Colonic mucosa (tissue), 4 donors: ENCODE measurements at regions of chr22 and their contacts with region 1.

Region 1: GRCh38 chr22:50250555-50251476 is at the start of gene HDAC10:
- DNase-seq: peak; percentile 90
- H3K4me3 ChIP-seq: peak within 1 kb of the TSS; percentile 90
- H3K27ac ChIP-seq: peak within 1 kb of the TSS; percentile 47
- H3K4me1 ChIP-seq: peaks cover 23% of the 10 kb centered on the region
- H3K27me3 ChIP-seq: no peaks in the 10 kb centered on the region
- CTCF ChIP-seq: no peak
- total RNA-seq, gene HDAC10: 40.5 to 59.1 TPM

Region 2: GRCh38 chr22:50148991-50149721 is 101.7 kb before region 1 on chr22:
- intact Hi-C with region 1: no loop called
- DNase-seq: peak; percentile 61
- H3K4me3 ChIP-seq: no peak overlapping the region
- H3K27ac ChIP-seq: no peak overlapping the region
- H3K4me1 ChIP-seq: no peaks in the 10 kb centered on the region
- H3K27me3 ChIP-seq: no peaks in the 10 kb centered on the region
- CTCF ChIP-seq: peak; percentile 77

Region 3: DNA sequence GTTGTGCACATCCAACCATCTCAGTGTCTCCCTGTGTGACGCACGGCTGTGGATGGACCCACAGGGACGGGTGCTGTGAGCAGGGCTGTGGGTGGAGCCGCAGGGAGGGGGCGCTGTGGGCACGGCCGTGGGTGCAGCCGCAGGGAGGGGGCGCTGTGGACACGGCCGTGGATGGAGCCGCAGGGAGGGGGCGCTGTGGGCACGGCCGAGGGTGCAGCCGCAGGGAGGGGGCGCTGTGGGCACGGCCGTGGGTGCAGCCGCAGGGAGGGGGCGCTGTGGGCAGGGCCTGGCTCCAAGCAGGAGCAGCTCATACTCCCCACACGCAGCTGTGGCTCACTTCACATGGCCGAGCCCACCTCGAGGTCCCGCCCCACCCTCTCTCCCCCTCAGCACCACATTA is 25.3 kb after region 1 on chr22:
- intact Hi-C with region 1: no loop called
- DNase-seq: peak; percentile 74
- H3K4me3 ChIP-seq: no peak overlapping the region
- H3K27ac ChIP-seq: no peak overlapping the region
- H3K4me1 ChIP-seq: peaks cover 8% of the 10 kb centered on the region
- H3K27me3 ChIP-seq: peaks cover 8% of the 10 kb centered on the region
- CTCF ChIP-seq: peak; percentile 71

Region 4: DNA sequence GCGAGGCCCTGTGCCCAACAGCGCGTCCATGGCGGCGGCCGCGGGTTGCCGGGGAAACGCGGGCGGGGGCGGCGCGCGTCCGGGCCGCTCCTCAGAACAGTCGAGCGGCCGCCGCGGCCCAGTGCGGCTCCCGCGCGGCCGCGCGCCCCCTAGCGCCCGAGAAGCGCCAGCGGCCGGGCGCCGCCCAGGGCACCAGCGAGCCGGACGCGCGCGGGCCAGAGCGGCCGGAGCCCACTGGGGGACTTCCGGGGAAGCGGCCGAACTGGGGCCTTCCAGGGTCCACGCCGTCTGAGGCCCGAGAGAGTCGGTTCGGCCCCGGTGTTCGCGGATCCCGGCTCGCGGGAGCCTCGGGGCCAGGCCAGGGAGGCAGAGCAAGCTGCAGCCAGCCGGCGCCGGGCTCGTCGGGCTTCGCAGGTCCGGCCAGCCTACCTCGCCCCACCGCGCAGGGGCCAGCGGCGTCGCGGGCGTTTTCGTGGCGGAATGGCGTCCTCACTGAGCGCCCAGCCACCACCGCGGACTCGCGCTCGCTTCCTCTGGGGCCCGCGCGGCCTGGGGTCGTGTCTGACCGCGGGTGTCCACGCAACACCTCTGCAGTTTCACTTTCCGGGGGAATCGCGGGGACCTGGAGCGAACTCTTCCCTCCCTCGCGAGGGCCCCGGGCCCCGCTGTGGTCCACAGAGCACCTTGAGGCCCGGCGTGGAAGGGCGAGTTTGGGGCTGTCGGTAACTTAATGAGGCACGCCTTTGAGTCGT is 76.3 kb after region 1 on chr22 and contains the start of gene DENND6B:
- intact Hi-C with region 1: no loop called
- DNase-seq: peak; percentile 80
- H3K4me3 ChIP-seq: peak within 1 kb of the TSS; percentile 73
- H3K27ac ChIP-seq: peak within 1 kb of the TSS; percentile 87
- H3K4me1 ChIP-seq: peaks cover 3% of the 10 kb centered on the region
- H3K27me3 ChIP-seq: no peaks in the 10 kb centered on the region
- CTCF ChIP-seq: peak; percentile 41
- total RNA-seq, gene DENND6B: 2.4 to 4.0 TPM

Region 5: DNA sequence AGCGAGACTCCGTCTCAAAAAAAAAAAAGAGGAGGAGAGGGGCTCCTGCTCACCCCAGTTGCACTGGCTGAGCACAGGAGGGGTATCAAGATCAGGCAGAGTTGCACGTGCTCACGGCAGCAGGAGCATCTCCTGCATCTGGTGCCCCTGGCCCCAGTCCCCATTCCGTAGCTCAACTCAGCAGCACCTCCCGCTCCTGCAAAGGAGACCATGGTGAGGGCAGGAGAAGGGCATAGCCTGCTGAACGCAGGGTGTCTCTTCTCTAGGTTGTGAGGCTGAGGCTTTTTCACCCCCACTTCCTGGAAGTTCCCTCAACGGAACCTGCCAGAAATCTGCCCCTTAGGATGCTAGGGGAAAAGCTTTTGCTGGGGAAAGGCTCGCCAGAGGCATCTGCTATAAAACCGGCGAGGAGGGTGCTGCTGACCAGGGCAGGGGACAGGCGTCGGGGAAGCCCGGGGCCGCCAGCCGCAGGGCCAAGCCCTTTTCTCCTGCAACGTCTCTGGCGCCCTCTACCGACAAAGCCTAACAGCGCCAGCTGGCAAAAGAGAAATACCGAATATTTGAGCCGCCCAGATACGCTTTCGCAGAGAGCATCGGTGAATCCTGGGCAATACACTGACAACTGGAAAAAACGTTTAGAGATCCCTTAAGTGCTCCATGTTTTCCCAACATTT is 91.3 kb after region 1 on chr22:
- intact Hi-C with region 1: loop called (anchors 5 kb)
- DNase-seq: peak; percentile 94
- H3K4me3 ChIP-seq: peak overlapping the region; percentile 75
- H3K27ac ChIP-seq: peak overlapping the region; percentile 86
- H3K4me1 ChIP-seq: no peaks in the 10 kb centered on the region
- H3K27me3 ChIP-seq: no peaks in the 10 kb centered on the region
- CTCF ChIP-seq: peak; percentile 98

Region 6: DNA sequence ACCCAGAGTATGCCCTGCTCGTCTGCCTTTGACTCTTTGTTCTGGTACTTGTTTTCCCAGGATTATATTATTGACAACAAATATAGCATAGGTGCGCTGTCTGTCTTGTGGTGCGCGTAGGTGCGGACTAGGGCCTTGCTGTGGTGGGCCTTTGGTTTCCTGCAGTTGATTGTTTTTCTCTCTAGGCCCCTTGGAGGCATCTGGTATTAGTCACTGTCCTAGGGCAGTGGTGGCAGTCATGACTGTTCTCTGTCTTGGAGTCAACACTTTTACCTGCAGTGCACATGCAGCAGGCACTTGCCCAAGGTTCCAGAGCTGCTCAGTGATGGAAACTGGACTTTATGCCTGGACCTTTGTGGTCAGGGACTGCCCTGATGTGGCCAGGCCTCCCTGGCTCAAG is 110.9 kb after region 1 on chr22:
- intact Hi-C with region 1: no loop called
- DNase-seq: no peak
- H3K4me3 ChIP-seq: no peak overlapping the region
- H3K27ac ChIP-seq: no peak overlapping the region
- H3K4me1 ChIP-seq: no peaks in the 10 kb centered on the region
- H3K27me3 ChIP-seq: no peaks in the 10 kb centered on the region
- CTCF ChIP-seq: no peak

Region 7: DNA sequence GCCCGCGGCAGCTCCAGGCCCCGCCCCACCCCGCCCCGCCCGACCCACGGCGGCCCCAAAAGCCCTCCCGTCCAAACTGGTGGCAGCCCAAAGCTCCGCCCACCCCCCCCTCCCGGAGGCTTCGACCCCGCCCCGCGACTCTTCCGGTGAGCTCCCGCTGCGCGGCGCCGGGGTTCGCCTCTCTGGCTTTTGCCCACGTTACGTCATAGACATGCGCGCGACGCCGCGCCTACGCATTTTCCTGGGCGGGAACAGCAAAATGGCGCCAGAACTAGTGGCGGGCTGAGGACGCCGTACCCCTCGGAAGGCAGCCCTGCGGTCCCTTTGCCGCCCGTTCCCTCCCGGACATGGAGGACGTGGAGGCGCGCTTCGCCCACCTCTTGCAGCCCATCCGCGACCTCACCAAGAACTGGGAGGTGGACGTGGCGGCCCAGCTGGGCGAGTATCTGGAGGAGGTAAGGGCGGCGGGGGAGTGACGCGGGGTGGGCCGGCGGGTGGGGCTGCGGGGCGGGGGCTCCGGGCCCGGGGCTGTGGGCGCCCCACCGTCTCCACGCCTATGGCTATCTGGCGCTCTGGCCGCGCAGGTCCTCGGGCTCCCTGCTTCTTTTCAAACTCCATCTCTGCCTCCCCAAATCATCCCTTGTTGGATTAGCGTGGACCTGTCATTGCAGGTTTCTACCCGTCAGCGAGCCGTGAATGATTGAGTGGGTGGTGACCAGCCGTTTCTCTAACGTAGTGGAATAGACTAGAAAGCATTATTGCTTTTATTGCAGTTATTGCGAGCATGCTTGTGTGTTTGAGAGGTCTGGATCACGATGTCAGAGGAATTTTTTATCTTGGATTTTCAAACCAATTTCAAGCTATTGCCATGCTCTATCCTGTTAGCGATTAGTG is 257.4 kb after region 1 on chr22 and contains the start of gene NCAPH2:
- intact Hi-C with region 1: loop called (anchors 10 kb)
- DNase-seq: peak; percentile 97
- H3K4me3 ChIP-seq: peak within 1 kb of the TSS; percentile 74
- H3K27ac ChIP-seq: peak within 1 kb of the TSS; percentile 72
- H3K4me1 ChIP-seq: peaks cover 16% of the 10 kb centered on the region
- H3K27me3 ChIP-seq: no peaks in the 10 kb centered on the region
- CTCF ChIP-seq: no peak
- total RNA-seq, gene NCAPH2: 27.4 to 71.5 TPM